Body of pancreas (tissue), 4 donors: ENCODE measurements at regions of chr4 and their contacts with region 1.

Region 1: GRCh38 chr4:94127707-94128328 is 79.8 kb upstream of the SMARCAD1 start:
- DNase-seq: no peak
- ATAC-seq: peak; percentile 50
- H3K4me3 ChIP-seq: no peak overlapping the region
- H3K27ac ChIP-seq: no peak overlapping the region
- H3K4me1 ChIP-seq: no peaks in the 10 kb centered on the region
- H3K27me3 ChIP-seq: no peaks in the 10 kb centered on the region
- CTCF ChIP-seq: peak; percentile 49 to 65 (median 60)
- POLR2A ChIP-seq: no peak

Region 2: DNA sequence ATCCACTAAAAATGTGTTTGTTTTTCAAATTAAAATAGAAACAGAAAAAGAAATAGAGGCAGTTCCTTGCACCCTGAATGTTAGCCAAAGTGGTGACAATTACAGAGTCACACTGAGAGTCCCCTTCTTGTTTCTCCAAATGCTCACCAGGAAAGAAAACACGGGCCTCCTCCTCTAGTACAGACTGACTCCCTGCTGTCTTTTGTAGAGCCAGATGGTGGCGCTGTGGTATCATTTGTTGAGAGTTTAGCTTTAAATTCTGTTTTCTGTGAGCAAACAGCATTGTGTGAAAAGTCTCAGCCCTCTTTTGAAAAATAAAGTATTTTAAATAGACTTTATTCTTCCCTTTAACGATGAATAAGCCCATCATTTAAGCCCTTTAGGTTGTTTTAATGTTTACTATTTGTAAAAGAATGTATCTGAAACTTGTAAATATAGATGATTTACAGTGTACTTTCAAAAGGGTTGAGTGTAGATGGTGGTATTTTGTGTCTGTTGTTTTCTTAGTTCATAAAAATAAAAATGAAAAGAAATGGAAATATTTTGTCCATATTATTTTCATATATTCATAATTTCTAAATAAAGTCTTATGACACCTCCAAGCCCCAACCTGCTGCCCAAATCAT is 336.1 kb before region 1 on chr4:
- intact Hi-C with region 1: loop called (anchors 10 kb)
- DNase-seq: peak; percentile 56 to 71 (median 60)
- ATAC-seq: peak; percentile 76
- H3K4me3 ChIP-seq: no peak overlapping the region
- H3K27ac ChIP-seq: no peak overlapping the region
- H3K4me1 ChIP-seq: no peaks in the 10 kb centered on the region
- H3K27me3 ChIP-seq: no peaks in the 10 kb centered on the region
- CTCF ChIP-seq: peak; percentile 39 to 86 (median 73)
- POLR2A ChIP-seq: no peak

Region 3: DNA sequence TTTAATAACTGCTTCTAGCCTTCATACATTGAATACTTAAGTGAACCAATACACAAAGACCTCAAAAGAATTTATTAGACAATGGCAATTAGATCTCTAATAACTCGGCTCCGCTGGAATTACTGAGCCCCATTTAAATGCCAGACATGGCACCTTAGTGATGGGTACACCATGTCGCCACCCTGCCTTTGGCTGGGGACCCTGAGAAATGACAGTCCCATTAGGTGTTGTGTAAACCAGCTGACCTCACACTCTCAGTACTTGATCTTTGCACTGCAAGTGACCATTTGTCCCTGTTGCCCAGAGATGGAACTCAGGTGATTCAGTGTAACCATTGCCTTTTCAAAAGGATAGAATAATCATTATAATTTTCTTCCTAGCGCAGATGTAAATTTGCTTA is 64.7 kb before region 1 on chr4:
- intact Hi-C with region 1: no loop called
- DNase-seq: no peak
- ATAC-seq: no peak
- H3K4me3 ChIP-seq: no peak overlapping the region
- H3K27ac ChIP-seq: no peak overlapping the region
- H3K4me1 ChIP-seq: no peaks in the 10 kb centered on the region
- H3K27me3 ChIP-seq: no peaks in the 10 kb centered on the region
- CTCF ChIP-seq: no peak
- POLR2A ChIP-seq: no peak

Region 4: GRCh38 chr4:94746750-94747149 is 618.9 kb after region 1 on chr4:
- intact Hi-C with region 1: no loop called
- DNase-seq: no peak
- ATAC-seq: no peak
- H3K4me3 ChIP-seq: no peak overlapping the region
- H3K27ac ChIP-seq: no peak overlapping the region
- H3K4me1 ChIP-seq: no peaks in the 10 kb centered on the region
- H3K27me3 ChIP-seq: no peaks in the 10 kb centered on the region
- CTCF ChIP-seq: no peak
- POLR2A ChIP-seq: no peak